ENCODE measurements at regions of chrX and their contacts with region 1.

Region 1: DNA sequence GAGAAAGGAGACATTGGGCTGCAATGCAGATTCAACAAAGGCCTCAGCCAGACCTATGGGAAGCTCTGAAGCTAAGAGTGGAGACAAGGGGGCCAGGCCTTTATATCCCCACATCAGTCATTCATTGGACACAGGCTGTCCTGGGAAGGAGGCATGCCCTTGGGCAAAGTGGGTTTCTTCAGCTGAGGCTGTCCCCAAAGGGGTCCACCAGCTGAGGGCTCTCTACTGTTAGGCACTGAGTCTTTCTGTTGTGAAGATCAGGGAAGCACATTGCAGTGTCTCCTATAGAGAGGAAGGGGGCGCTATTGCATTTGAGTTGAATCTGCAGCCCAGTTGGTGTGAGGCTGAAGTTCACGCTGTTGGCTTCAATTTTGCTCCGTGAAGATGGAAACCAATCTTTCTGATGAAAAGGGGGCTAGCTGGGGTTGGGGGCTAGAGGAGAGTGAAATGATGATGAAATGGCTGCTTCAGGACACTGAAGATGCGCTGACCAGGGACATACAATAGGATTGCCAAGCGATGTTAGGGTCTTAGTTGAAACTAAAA is 48.0 kb downstream of the SLC25A5 start:
- DNase-seq: peak; percentile 80
- ATAC-seq: peak; percentile 89
- H3K4me3 ChIP-seq: no peak overlapping the region
- H3K4me3 Mint-ChIP-seq: no peak overlapping the region
- H3K27ac ChIP-seq: no peak overlapping the region
- H3K27ac Mint-ChIP-seq: peak overlapping the region; percentile 16
- H3K4me1 ChIP-seq: peaks cover 0 to 3% of the 10 kb centered on the region in 2 donors
- H3K4me1 Mint-ChIP-seq: peaks cover 5% of the 10 kb centered on the region
- H3K27me3 ChIP-seq: no peaks in the 10 kb centered on the region
- H3K27me3 Mint-ChIP-seq: no peaks in the 10 kb centered on the region
- CTCF ChIP-seq: peak; percentile 74

Region 2: DNA sequence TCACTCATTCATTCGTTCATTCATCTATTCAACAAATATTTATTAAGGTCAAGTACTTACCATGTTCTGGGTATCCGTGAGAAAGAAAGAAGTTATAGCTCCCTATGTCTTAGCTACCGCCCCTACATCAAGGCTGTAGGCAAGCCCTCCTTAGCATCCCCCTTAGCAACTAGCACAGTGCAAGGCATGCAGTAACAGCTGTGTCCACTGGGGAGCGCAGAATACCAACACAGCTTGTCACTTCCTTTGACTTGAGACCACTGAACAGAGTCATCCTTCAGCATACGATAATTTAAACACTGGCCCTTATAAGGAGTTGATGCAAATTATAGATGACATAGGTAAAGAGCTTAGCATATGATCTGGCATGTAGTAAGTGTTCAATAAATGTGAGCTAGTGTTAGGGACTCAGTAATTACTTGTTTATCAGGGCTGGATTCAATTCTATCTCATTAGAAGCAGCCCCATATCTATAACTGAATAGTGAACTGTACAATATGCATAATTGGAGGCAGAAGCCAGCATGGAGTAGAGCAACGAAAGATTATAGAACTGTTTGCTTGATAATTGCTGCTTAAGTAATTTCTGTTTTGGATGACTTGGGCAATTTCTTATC is 397.3 kb before region 1 on chrX:
- CTCF ChIA-PET with region 1: no interaction called
- POLR2A ChIA-PET with region 1: no interaction called
- intact Hi-C with region 1: loop called (anchors 5 kb)
- DNase-seq: peak; percentile 59
- ATAC-seq: peak; percentile 69
- H3K4me3 ChIP-seq: no peak overlapping the region
- H3K4me3 Mint-ChIP-seq: no peak overlapping the region
- H3K27ac ChIP-seq: no peak overlapping the region
- H3K27ac Mint-ChIP-seq: no peak overlapping the region
- H3K4me1 ChIP-seq: no peaks in the 10 kb centered on the region
- H3K4me1 Mint-ChIP-seq: no peaks in the 10 kb centered on the region
- H3K27me3 ChIP-seq: peaks cover 0 to 2% (median 0%) of the 10 kb centered on the region in 4 experiments
- H3K27me3 Mint-ChIP-seq: peaks cover 8% of the 10 kb centered on the region
- CTCF ChIP-seq: peak; percentile 74

Region 3: GRCh38 chrX:119488749-119489148 is 27.5 kb before region 1 on chrX:
- CTCF ChIA-PET with region 1: interaction called, 12 read pairs
- POLR2A ChIA-PET with region 1: no interaction called
- intact Hi-C with region 1: loop called (anchors 1 kb)
- DNase-seq: peak; percentile 56
- ATAC-seq: no peak
- H3K4me3 ChIP-seq: no peak overlapping the region
- H3K4me3 Mint-ChIP-seq: no peak overlapping the region
- H3K27ac ChIP-seq: no peak overlapping the region
- H3K27ac Mint-ChIP-seq: no peak overlapping the region
- H3K4me1 ChIP-seq: no peaks in the 10 kb centered on the region
- H3K4me1 Mint-ChIP-seq: peaks cover 2% of the 10 kb centered on the region
- H3K27me3 ChIP-seq: no peaks in the 10 kb centered on the region
- H3K27me3 Mint-ChIP-seq: no peaks in the 10 kb centered on the region
- CTCF ChIP-seq: peak; percentile 67

Region 4: GRCh38 chrX:119574394-119575266 is 58.4 kb after region 1 on chrX and contains the start of gene UBE2A:
- CTCF ChIA-PET with region 1: interaction called, 9 read pairs
- POLR2A ChIA-PET with region 1: no interaction called
- intact Hi-C with region 1: loop called (anchors 1 kb)
- DNase-seq: peak; percentile 94
- ATAC-seq: peak; percentile 94
- H3K4me3 ChIP-seq: peak within 1 kb of the TSS; percentile 42 to 77 (median 70)
- H3K4me3 Mint-ChIP-seq: peak within 1 kb of the TSS; percentile 88
- H3K27ac ChIP-seq: peak within 1 kb of the TSS; percentile 68 to 83
- H3K27ac Mint-ChIP-seq: peak within 1 kb of the TSS; percentile 88
- H3K4me1 ChIP-seq: peaks cover 26 to 32% of the 10 kb centered on the region in 2 donors
- H3K4me1 Mint-ChIP-seq: peaks cover 34% of the 10 kb centered on the region
- H3K27me3 ChIP-seq: no peaks in the 10 kb centered on the region
- H3K27me3 Mint-ChIP-seq: no peaks in the 10 kb centered on the region
- CTCF ChIP-seq: no peak
- total RNA-seq, gene UBE2A: 67.1 and 70.9 TPM in 2 replicates

Region 5: DNA sequence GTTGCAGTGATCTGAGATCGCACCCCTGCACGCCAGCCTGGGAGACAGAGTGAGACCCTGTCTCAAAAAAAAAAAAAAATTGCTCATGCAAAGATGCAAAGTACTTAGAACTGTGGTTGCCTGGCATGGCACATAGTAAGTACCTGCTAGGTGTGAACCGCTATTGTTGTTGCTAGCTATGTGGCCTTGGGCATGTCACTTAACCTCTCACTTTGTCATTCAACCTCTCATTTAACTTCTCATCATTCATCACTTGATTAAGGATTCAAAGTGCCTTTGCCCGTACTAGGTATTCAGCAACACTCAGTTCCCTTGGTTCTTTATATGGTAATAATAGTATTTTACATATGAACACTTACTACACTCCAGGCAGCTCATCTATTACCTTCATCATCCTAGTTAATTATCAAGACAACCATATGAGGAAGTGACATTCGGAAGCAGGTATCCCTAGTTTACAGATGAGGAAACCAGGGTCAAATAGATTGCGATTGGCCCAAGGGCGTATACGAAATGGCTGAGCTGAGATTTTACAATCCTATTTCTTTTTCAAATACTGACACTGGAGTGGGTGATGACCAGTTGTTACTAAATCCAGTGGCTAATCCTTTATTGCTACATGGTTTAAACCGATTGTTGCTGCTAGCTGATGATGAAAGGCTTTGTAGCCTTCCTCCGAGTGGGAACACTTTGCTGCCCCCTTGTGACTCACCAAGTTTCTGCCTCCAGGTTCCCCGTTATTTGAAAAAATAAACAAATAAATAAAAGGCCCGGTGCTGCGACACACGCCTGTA is 213.4 kb after region 1 on chrX:
- CTCF ChIA-PET with region 1: interaction called, 44 read pairs
- POLR2A ChIA-PET with region 1: no interaction called
- intact Hi-C with region 1: loop called (anchors 1 kb)
- DNase-seq: peak; percentile 77
- ATAC-seq: peak; percentile 57
- H3K4me3 ChIP-seq: no peak overlapping the region
- H3K4me3 Mint-ChIP-seq: peak overlapping the region; percentile 44
- H3K27ac ChIP-seq: no peak overlapping the region
- H3K27ac Mint-ChIP-seq: no peak overlapping the region
- H3K4me1 ChIP-seq: peaks cover 0 to 5% of the 10 kb centered on the region in 2 donors
- H3K4me1 Mint-ChIP-seq: peaks cover 6% of the 10 kb centered on the region
- H3K27me3 ChIP-seq: no peaks in the 10 kb centered on the region
- H3K27me3 Mint-ChIP-seq: no peaks in the 10 kb centered on the region
- CTCF ChIP-seq: peak; percentile 71

Region 6: DNA sequence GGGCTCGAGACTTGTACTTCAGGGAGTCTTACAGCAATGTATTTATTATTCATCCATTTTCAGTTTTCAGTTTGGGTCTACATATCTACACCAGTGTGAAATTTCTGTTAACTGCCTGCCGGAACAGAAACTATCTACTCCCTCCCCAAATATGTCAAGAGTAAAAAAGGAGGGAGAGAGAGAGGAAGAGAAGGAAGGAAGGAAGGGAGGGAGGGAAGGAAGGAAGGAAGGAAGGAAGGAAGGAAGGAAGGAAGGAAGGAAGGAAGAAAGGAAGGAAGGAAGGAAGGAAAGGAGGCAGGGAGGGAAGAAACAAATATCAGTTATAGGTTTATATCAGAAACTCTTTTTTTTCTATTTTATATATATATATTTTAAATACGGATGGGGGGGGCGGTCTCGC is 262.6 kb after region 1 on chrX:
- CTCF ChIA-PET with region 1: interaction called, 16 read pairs
- POLR2A ChIA-PET with region 1: no interaction called
- intact Hi-C with region 1: loop called (anchors 1 kb)
- DNase-seq: no peak
- ATAC-seq: no peak
- H3K4me3 ChIP-seq: no peak overlapping the region
- H3K4me3 Mint-ChIP-seq: no peak overlapping the region
- H3K27ac ChIP-seq: no peak overlapping the region
- H3K27ac Mint-ChIP-seq: peak overlapping the region; percentile 32
- H3K4me1 ChIP-seq: peaks cover 4 to 24% of the 10 kb centered on the region in 2 donors
- H3K4me1 Mint-ChIP-seq: peaks cover 27% of the 10 kb centered on the region
- H3K27me3 ChIP-seq: no peaks in the 10 kb centered on the region
- H3K27me3 Mint-ChIP-seq: no peaks in the 10 kb centered on the region
- CTCF ChIP-seq: no peak

Measured in B cell (primary cell).